CD4-positive, alpha-beta memory T cell (primary cell): ENCODE measurements at regions of chr22 and their contacts with region 1.

Region 1: DNA sequence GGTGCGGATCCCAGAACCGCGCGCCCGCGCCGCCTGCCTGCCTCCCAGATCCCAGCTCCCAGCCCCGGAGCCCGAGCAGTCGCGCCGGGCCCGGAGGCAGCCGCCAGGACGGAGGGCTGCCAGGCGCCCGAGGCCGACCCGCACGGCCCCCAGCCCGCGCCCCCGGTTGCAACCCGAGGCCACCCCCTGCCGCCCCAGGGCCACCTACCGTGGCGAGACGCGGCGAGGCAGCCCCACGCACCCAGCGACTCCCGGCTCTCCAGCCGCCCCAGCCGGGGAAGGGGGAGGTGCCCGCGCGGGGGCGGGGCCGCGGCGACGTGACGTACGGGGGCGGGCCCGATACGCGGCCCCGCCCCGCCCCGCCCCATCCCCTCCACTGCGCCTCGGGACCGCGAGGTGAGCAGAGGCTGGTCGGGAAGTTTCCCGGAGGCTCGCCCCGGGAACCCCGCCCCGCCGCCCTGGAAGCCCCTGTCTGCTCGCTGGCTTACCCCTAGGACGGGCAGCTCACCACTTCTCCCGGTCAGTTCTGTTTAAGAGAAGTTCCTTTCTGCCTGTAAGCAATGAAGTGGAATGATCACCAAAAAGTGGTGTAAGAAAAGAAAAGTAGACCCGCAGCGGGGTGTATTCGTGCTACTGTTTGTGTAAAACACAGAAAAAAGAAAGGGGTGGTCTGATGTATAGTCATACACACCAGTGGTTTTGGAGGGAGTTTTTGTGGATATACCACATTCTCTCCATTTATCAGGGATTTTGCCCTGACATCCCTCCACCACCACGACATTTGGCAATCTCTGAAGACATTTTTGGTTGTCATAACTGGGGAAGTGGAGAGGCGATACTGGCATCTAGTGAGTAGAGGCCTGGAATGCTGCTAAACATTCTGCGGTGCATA is at the start of gene TPST2:
- DNase-seq: peak; percentile 73 to 82 (median 76)
- H3K4me3 ChIP-seq: peak within 1 kb of the TSS; percentile 78 to 95
- H3K4me3 Mint-ChIP-seq: peak within 1 kb of the TSS; percentile 90 to 98 (median 94)
- H3K27ac ChIP-seq: peak within 1 kb of the TSS; percentile 66
- H3K27ac Mint-ChIP-seq: peak within 1 kb of the TSS; percentile 91 to 98 (median 96)
- H3K4me1 ChIP-seq: peaks cover 81% of the 10 kb centered on the region
- H3K4me1 Mint-ChIP-seq: peaks cover 41 to 85% (median 61%) of the 10 kb centered on the region in 4 donors
- H3K27me3 ChIP-seq: no peaks in the 10 kb centered on the region
- H3K27me3 Mint-ChIP-seq: no peaks in the 10 kb centered on the region
- total RNA-seq, gene TPST2: 23.9 to 27.9 TPM

Region 2: DNA sequence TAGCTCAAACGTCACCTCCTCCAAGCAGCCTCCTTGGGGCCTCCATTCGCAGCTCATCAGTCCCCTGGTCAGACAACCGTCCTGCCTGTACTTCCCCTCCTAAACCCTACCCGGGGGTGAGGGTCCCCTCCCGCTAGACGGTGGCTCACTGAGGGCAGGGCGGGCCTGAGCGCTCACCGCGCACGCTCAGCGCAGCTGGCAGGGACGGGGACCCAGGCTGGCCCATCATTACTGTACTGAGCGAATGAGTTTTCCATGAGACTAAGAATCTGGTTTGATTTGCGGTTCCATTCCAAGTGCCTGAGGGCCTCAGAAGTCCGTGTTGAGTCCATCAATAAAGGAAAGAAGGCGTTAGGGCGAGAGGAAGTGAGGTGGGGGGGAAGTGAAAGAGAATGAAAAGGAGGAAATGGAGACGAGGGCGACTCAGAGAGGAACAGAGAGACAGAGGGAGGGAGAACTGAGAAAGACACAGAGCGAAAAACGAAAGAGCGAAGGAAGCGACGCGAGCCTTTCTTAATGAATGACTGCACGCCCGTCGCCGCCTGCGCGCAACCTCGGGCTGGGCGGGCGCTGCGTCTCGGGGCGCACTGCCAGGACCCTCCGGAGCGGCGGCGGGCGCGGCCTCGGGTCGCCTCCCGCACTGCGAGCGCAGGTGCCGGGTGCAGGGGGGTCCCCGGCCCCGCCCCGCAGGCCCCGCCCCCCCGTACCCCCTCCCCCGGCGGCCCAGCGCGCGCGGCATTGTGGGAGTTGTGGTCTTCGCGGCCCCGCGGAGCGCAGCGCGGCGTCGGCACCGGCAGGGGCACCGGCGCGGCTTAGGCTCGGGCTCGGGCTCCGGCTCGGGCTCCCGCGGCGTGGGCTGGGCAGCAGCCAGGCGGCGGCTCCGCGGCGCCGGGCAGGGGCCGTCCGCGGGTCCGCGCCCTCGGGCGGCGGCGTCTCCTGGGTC is 161.3 kb before region 1 on chr22 and contains the start of gene ASPHD2:
- CTCF ChIA-PET with region 1: no interaction called
- POLR2A ChIA-PET with region 1: no interaction called
- intact Hi-C with region 1: loop called (anchors 5 kb)
- DNase-seq: peak; percentile 81 to 86 (median 83)
- H3K4me3 ChIP-seq: peak within 1 kb of the TSS; percentile 64 to 87
- H3K4me3 Mint-ChIP-seq: peak within 1 kb of the TSS; percentile 94 to 100 (median 98)
- H3K27ac ChIP-seq: peak within 1 kb of the TSS; percentile 89
- H3K27ac Mint-ChIP-seq: peak within 1 kb of the TSS; percentile 87 to 100 (median 99)
- H3K4me1 ChIP-seq: peaks cover 25% of the 10 kb centered on the region
- H3K4me1 Mint-ChIP-seq: peaks cover 18 to 37% (median 26%) of the 10 kb centered on the region in 4 donors
- H3K27me3 ChIP-seq: no peaks in the 10 kb centered on the region
- H3K27me3 Mint-ChIP-seq: peaks cover 0 to 2% of the 10 kb centered on the region in 2 donors
- total RNA-seq, gene ASPHD2: 4.0 to 4.1 TPM

Region 3: GRCh38 chr22:26511857-26512793 is 78.0 kb before region 1 on chr22 and contains the start of gene TFIP11:
- CTCF ChIA-PET with region 1: no interaction called
- POLR2A ChIA-PET with region 1: interaction called, 5 read pairs
- intact Hi-C with region 1: loop called (anchors 5 kb)
- DNase-seq: peak; percentile 83 to 90 (median 84)
- H3K4me3 ChIP-seq: peak within 1 kb of the TSS; percentile 83 to 90
- H3K4me3 Mint-ChIP-seq: peak within 1 kb of the TSS; percentile 99 to 100 (median 99)
- H3K27ac ChIP-seq: peak within 1 kb of the TSS; percentile 94
- H3K27ac Mint-ChIP-seq: peak within 1 kb of the TSS; percentile 95 to 100 (median 100)
- H3K4me1 ChIP-seq: peaks cover 21% of the 10 kb centered on the region
- H3K4me1 Mint-ChIP-seq: peaks cover 26 to 46% (median 40%) of the 10 kb centered on the region in 4 donors
- H3K27me3 ChIP-seq: no peaks in the 10 kb centered on the region
- H3K27me3 Mint-ChIP-seq: no peaks in the 10 kb centered on the region
- total RNA-seq, gene TFIP11: 72.7 to 74.5 TPM

Region 4: DNA sequence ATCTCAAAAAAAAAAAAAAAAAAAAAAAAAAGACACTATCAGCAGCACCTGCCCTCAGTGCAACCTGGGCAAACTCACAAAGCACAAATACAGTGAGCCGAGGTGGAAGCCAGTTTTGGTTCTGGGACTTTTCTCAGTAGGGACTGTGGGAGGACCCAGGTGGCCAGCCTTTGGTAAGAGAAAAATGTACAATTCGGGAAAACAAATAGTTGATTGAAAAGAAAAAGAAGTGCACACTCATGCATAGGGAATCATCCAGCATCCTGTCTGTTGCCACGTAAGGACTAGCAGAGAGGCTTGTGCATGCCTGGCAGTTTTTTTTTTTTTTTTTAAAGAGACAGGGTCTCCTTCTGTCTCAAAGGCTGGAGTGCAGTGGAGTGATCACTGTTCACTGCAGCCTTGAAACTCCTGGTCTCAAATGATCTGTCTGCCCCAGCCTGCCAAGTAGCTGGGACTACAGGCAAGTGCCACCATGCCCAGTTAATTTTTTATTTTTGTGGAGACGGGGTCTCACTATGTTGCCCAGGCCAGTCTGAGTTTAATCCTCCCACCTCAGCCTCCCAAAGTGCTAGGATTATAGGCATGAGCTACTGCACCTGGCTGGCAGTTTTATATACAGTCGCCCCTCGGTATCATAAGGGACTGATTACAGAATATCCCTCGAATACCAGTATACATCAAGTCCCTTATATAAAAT is 36.9 kb before region 1 on chr22:
- CTCF ChIA-PET with region 1: no interaction called
- POLR2A ChIA-PET with region 1: no interaction called
- intact Hi-C with region 1: no loop called
- DNase-seq: no peak
- H3K4me3 ChIP-seq: no peak overlapping the region
- H3K4me3 Mint-ChIP-seq: no peak overlapping the region
- H3K27ac ChIP-seq: no peak overlapping the region
- H3K27ac Mint-ChIP-seq: peak overlapping the region in 2 of 7 donors; percentile 41 to 42
- H3K4me1 ChIP-seq: no peaks in the 10 kb centered on the region
- H3K4me1 Mint-ChIP-seq: peaks cover 10 to 29% (median 17%) of the 10 kb centered on the region in 4 donors
- H3K27me3 ChIP-seq: no peaks in the 10 kb centered on the region
- H3K27me3 Mint-ChIP-seq: no peaks in the 10 kb centered on the region

Region 5: DNA sequence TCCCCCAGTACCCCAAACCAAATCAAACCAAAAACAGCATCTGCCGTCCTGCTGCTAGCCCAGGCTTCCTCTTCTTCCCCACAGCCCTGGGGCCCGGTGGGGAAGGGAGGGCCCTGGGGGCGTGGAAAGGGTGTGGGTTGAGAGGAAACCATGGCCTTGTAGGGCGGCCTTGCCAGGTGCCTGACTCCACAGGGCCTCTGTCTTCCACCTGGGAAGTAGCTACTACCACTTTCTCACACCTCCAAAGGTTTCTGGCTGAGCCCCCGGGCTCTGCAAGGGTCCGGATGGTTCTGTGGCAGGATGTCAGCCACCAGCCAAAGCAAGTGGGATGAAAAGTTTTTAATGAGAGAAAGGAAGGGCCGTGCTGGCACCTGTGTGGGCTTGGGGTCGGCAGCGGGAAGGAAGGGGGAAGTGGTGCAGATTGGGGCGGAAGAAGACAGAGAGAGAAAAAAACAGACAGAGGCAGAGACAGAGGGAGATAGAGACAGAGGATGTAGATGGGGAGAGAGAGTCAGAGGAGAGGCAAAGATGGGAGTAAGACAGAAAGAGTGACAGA is 10.7 kb before region 1 on chr22:
- CTCF ChIA-PET with region 1: interaction called, 3 read pairs
- POLR2A ChIA-PET with region 1: interaction called, 12 read pairs
- intact Hi-C with region 1: loop called (anchors 1 kb)
- DNase-seq: peak; percentile 47 to 65 (median 56)
- H3K4me3 ChIP-seq: peak overlapping the region in 1 of 2 donors; percentile 35
- H3K4me3 Mint-ChIP-seq: peak overlapping the region; percentile 55 to 88 (median 80)
- H3K27ac ChIP-seq: peak overlapping the region; percentile 50
- H3K27ac Mint-ChIP-seq: peak overlapping the region; percentile 88 to 99 (median 94)
- H3K4me1 ChIP-seq: peaks cover 48% of the 10 kb centered on the region
- H3K4me1 Mint-ChIP-seq: peaks cover 39 to 68% (median 56%) of the 10 kb centered on the region in 4 donors
- H3K27me3 ChIP-seq: no peaks in the 10 kb centered on the region
- H3K27me3 Mint-ChIP-seq: no peaks in the 10 kb centered on the region

Region 6: GRCh38 chr22:26642465-26643417 is 52.6 kb after region 1 on chr22:
- CTCF ChIA-PET with region 1: no interaction called
- POLR2A ChIA-PET with region 1: interaction called, 11 read pairs
- intact Hi-C with region 1: no loop called
- DNase-seq: peak; percentile 45 to 74 (median 51)
- H3K4me3 ChIP-seq: peak overlapping the region; percentile 2 to 17
- H3K4me3 Mint-ChIP-seq: peak overlapping the region; percentile 55 to 79 (median 70)
- H3K27ac ChIP-seq: peak overlapping the region; percentile 61
- H3K27ac Mint-ChIP-seq: peak overlapping the region; percentile 90 to 97 (median 96)
- H3K4me1 ChIP-seq: peaks cover 71% of the 10 kb centered on the region
- H3K4me1 Mint-ChIP-seq: peaks cover 53 to 73% (median 64%) of the 10 kb centered on the region in 4 donors
- H3K27me3 ChIP-seq: no peaks in the 10 kb centered on the region
- H3K27me3 Mint-ChIP-seq: no peaks in the 10 kb centered on the region